ENCODE measurements at regions of chr10 and their contacts with region 1.

Region 1: DNA sequence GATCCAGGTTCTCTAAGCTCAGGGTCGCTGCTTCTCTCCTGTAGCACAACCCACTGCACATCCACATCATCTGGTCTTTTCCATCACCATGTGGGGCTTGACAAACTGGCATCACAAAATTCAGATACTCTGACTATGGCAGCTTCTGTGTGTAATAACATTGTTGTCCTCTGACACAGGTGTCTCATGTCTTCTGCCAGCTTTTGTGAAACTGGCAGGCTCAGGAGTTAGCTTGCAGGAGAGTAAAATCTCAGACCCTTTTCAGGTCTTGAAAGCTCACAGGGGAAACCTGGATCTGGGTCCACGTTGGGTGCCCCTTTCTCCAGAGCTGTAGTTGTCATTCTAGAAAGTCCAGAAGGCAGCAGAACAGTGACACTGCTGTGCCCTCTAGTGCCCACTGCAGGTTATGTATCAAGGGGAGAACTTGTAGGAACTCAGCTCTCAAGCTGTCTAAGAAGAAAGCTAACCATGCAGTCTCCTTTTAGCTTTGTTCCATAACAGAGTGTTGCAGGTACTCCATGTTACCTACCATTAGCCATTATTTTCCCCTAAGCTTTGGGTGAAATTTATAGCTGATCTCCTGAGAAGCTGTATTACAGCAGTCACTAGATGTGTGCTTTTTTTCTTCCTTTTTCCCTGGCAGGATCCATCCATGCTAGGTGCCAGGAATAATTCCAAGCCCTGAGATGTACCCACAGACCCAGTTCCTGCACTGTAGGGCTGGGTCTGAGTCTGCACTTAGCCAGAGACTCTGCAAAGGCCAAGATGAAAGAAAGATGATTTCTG is 102.7 kb downstream of the ZNF248 start:
- DNase-seq: no peak
- ATAC-seq: peak; percentile 66; the same call in 2 of the 3 replicates
- H3K4me3 ChIP-seq: no peak overlapping the region
- H3K27ac ChIP-seq: no peak overlapping the region
- H3K4me1 ChIP-seq: no peaks in the 10 kb centered on the region
- H3K27me3 ChIP-seq: no peaks in the 10 kb centered on the region
- CTCF ChIP-seq: peak; percentile 17 to 55 (median 47); a peak in 4 of 6 replicates
- EP300 ChIP-seq: no peak
- POLR2A ChIP-seq: no peak
- RAD21 ChIP-seq: peak; percentile 66

Region 2: DNA sequence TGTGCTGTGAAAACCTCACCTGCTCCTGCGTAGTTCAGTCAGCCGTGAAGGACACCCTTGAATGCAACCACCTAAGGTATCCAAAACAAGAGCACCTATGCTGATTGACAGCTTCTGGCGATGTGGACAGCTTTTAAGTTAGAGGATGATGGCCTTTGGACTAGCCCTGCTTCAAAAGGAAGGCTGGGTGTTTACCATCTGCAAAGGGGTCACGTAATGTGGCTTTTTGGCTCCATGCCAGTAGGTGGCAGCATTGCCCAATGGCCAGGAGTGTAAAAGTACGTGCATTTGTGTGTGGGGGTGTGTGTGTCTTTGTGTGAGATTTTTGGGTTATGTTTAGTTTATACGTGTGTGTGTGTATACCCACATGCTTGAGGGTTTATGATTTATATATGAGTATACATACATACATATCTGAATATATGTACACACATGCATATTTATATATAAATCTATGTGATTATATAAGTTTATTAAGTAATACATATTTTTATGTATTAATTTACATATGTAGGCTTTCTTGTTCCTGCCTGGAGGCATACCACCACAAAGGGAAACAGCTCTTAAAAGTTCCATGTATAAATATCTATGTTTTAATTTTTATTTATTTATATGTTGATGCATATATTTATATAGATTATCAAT is 865.7 kb before region 1 on chr10:
- CTCF ChIA-PET with region 1: interaction called, 11 read pairs
- POLR2A ChIA-PET with region 1: no interaction called
- RAD21 ChIA-PET with region 1: no interaction called
- SMC1A ChIA-PET with region 1: interaction called, 6 read pairs
- in situ Hi-C with region 1: no loop called
- intact Hi-C with region 1: loop called (anchors 10 kb)
- DNase-seq: no peak
- ATAC-seq: peak; percentile 84
- H3K4me3 ChIP-seq: no peak overlapping the region
- H3K27ac ChIP-seq: no peak overlapping the region
- H3K4me1 ChIP-seq: no peaks in the 10 kb centered on the region
- H3K27me3 ChIP-seq: no peaks in the 10 kb centered on the region
- CTCF ChIP-seq: peak; percentile 72 to 77 (median 73)
- EP300 ChIP-seq: no peak
- POLR2A ChIP-seq: no peak
- RAD21 ChIP-seq: peak; percentile 77

Region 3: DNA sequence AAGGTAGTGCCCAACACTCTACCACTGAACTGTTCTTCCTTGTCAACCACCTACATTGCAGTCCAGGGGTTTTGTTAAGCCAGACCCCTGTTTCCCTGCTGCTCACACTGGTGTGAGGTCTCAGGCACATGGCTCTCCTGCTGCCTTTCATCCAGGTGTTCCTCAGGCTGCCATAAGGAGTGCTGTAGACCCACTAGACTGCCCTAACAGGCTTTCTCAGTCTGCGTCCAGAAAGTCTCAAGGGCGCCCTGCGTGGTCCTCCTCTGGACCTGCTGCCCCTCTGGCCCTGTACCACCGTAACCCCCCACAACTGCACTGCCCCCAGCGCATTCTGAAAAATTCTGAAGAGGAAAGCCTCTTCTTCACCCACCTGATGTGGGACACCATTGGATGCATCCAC is 855.1 kb before region 1 on chr10:
- CTCF ChIA-PET with region 1: no interaction called
- POLR2A ChIA-PET with region 1: no interaction called
- RAD21 ChIA-PET with region 1: no interaction called
- SMC1A ChIA-PET with region 1: no interaction called
- in situ Hi-C with region 1: no loop called
- intact Hi-C with region 1: loop called (anchors 10 kb)
- DNase-seq: no peak
- ATAC-seq: no peak
- H3K4me3 ChIP-seq: no peak overlapping the region
- H3K27ac ChIP-seq: no peak overlapping the region
- H3K4me1 ChIP-seq: no peaks in the 10 kb centered on the region
- H3K27me3 ChIP-seq: no peaks in the 10 kb centered on the region
- CTCF ChIP-seq: no peak
- EP300 ChIP-seq: no peak
- POLR2A ChIP-seq: no peak
- RAD21 ChIP-seq: no peak

Region 4: DNA sequence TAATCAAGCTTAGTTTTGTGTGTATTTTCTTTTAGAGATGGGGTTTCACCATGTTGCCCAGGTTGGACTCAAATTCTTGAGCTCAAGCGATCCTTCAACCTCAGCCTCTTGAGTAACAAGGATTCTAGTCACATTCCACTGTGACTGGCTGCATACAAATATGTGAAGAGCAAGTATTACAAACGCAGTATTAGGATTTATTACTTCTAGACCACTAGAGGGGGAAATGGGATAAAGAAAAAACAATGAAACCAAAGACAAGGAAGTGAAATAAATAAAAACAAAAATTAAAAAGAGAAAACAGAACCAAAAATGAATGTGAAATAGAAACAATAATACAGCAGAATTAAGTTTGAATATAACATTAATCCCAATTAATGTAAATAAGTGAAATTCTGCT is 320.6 kb before region 1 on chr10:
- CTCF ChIA-PET with region 1: interaction called, 11 read pairs
- POLR2A ChIA-PET with region 1: no interaction called
- RAD21 ChIA-PET with region 1: interaction called, 8 read pairs
- SMC1A ChIA-PET with region 1: interaction called, 8 read pairs
- in situ Hi-C with region 1: no loop called
- intact Hi-C with region 1: no loop called
- DNase-seq: no peak
- ATAC-seq: no peak
- H3K4me3 ChIP-seq: no peak overlapping the region
- H3K27ac ChIP-seq: no peak overlapping the region
- H3K4me1 ChIP-seq: no peaks in the 10 kb centered on the region
- H3K27me3 ChIP-seq: no peaks in the 10 kb centered on the region
- CTCF ChIP-seq: peak in 1 of 3 experiments; percentile 17; a peak in 1 of 6 replicates
- EP300 ChIP-seq: no peak
- POLR2A ChIP-seq: no peak
- RAD21 ChIP-seq: no peak

Region 5: DNA sequence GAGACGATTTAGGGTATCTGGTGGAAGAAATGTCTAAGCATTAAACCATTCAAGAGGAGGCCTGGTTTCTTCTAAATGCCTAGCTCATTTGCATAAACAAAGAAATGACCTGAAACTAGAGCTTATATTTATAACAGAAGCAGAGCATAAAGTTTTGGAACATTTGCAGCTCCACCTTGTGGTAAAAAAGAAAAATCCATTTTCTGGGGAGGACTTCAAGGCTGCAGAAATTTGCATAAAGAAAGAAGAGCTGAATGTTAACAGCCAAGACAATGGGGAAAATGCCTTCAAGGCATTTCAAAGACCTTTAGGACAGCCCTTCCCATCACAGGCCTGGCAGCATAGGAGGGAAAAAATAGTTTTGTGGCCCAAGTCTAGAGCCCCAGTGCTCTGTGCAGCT is 259.3 kb before region 1 on chr10:
- CTCF ChIA-PET with region 1: interaction called, 18 read pairs
- POLR2A ChIA-PET with region 1: no interaction called
- RAD21 ChIA-PET with region 1: interaction called, 6 read pairs
- SMC1A ChIA-PET with region 1: interaction called, 6 read pairs
- in situ Hi-C with region 1: no loop called
- intact Hi-C with region 1: no loop called
- DNase-seq: no peak
- ATAC-seq: no peak
- H3K4me3 ChIP-seq: no peak overlapping the region
- H3K27ac ChIP-seq: no peak overlapping the region
- H3K4me1 ChIP-seq: no peaks in the 10 kb centered on the region
- H3K27me3 ChIP-seq: no peaks in the 10 kb centered on the region
- CTCF ChIP-seq: 0 out of 6 replicates have a peak, but pooled peaks of 1 of the 3 experiments have one; percentile 8
- EP300 ChIP-seq: no peak
- POLR2A ChIP-seq: no peak
- RAD21 ChIP-seq: 0 out of 2 replicates have a peak, but pooled peaks have one; percentile 20

Region 6: GRCh38 chr10:37520488-37520887 is 234.2 kb before region 1 on chr10:
- CTCF ChIA-PET with region 1: interaction called, 13 read pairs
- POLR2A ChIA-PET with region 1: no interaction called
- RAD21 ChIA-PET with region 1: interaction called, 4 read pairs
- SMC1A ChIA-PET with region 1: interaction called, 3 read pairs
- in situ Hi-C with region 1: no loop called
- intact Hi-C with region 1: no loop called
- DNase-seq: no peak
- ATAC-seq: no peak
- H3K4me3 ChIP-seq: no peak overlapping the region
- H3K27ac ChIP-seq: no peak overlapping the region
- H3K4me1 ChIP-seq: no peaks in the 10 kb centered on the region
- H3K27me3 ChIP-seq: no peaks in the 10 kb centered on the region
- CTCF ChIP-seq: no peak
- EP300 ChIP-seq: no peak
- POLR2A ChIP-seq: no peak
- RAD21 ChIP-seq: no peak